Sigmoid colon (tissue), 7 donors: ENCODE measurements at regions of chr9 and their contacts with region 1.

Region 1: GRCh38 chr9:76445976-76446375 is 13.0 kb upstream of the GCNT1 start:
- DNase-seq: no peak
- H3K4me3 ChIP-seq: no peak overlapping the region
- H3K27ac ChIP-seq: no peak overlapping the region
- H3K4me1 ChIP-seq: peaks cover 0 to 7% (median 5%) of the 10 kb centered on the region in 4 donors
- H3K27me3 ChIP-seq: no peaks in the 10 kb centered on the region
- CTCF ChIP-seq: no peak
- EP300 ChIP-seq: no peak
- POLR2A ChIP-seq: no peak

Region 2: GRCh38 chr9:76658535-76659231 is 212.7 kb after region 1 on chr9:
- intact Hi-C with region 1: loop called (anchors 5 kb)
- DNase-seq: no peak
- H3K4me3 ChIP-seq: no peak overlapping the region
- H3K27ac ChIP-seq: no peak overlapping the region
- H3K4me1 ChIP-seq: peaks cover 0 to 49% (median 33%) of the 10 kb centered on the region in 4 donors
- H3K27me3 ChIP-seq: no peaks in the 10 kb centered on the region
- CTCF ChIP-seq: peak in 2 of 4 experiments; percentile 21 to 39
- EP300 ChIP-seq: no peak
- POLR2A ChIP-seq: no peak

Region 3: GRCh38 chr9:76704593-76705204 is 258.7 kb after region 1 on chr9:
- intact Hi-C with region 1: loop called (anchors 2 kb)
- DNase-seq: no peak
- H3K4me3 ChIP-seq: no peak overlapping the region
- H3K27ac ChIP-seq: peak overlapping the region in 1 of 4 donors; percentile 38
- H3K4me1 ChIP-seq: peaks cover 0 to 42% (median 25%) of the 10 kb centered on the region in 4 donors
- H3K27me3 ChIP-seq: no peaks in the 10 kb centered on the region
- CTCF ChIP-seq: peak; percentile 26 to 67 (median 46)
- EP300 ChIP-seq: no peak
- POLR2A ChIP-seq: no peak

Region 4: GRCh38 chr9:76996700-76997099 is 550.7 kb after region 1 on chr9:
- intact Hi-C with region 1: loop called (anchors 5 kb)
- DNase-seq: peak; percentile 77
- H3K4me3 ChIP-seq: no peak overlapping the region
- H3K27ac ChIP-seq: no peak overlapping the region
- H3K4me1 ChIP-seq: no peaks in the 10 kb centered on the region
- H3K27me3 ChIP-seq: no peaks in the 10 kb centered on the region
- CTCF ChIP-seq: peak; percentile 48 to 69 (median 65)
- EP300 ChIP-seq: no peak
- POLR2A ChIP-seq: no peak

Region 5: DNA sequence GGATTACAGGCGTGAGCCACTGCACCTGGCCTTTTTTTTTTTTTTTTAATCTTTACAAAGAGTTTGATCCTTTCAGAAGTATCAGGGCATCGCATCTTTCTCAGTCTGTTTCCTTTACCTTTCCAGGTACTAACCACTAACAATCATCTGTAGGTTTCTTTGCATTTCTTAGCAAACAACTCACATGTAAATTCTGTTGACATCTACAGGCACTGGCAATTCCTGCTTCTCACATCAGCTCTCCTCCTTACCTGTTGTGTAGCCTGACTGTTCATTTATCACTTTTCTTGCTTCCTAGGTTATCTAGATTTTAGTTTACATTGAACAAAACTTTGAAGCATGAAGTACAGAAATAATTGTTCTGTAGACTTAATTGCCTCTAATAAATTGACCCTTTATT is 703.9 kb after region 1 on chr9:
- intact Hi-C with region 1: loop called (anchors 5 kb)
- DNase-seq: no peak
- H3K4me3 ChIP-seq: no peak overlapping the region
- H3K27ac ChIP-seq: no peak overlapping the region
- H3K4me1 ChIP-seq: no peaks in the 10 kb centered on the region
- H3K27me3 ChIP-seq: peaks cover 0 to 4% (median 0%) of the 10 kb centered on the region in 3 donors
- CTCF ChIP-seq: no peak
- EP300 ChIP-seq: no peak
- POLR2A ChIP-seq: no peak